Heart right ventricle (tissue), 16 donors: ENCODE measurements at regions of chr6 and their contacts with region 1.

Region 1: DNA sequence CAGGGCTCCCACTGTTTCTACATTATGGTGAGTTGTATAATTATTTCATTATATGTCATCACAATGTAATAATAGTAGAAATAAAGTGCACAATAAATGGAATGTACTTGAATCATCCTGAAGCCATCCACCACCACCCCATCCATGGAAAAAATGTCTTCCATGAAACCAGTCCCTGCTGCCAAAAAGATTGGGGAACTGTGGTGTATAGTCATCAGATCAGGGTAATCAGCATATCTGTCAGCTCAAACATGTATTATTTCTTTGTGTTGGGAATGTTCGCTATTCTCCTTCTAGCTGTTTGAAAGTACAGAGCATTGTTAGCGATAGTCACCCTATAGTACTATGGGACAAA is 33.8 kb upstream of the SLC22A23 start:
- DNase-seq: no peak
- ATAC-seq: no peak
- H3K4me3 ChIP-seq: no peak overlapping the region
- H3K27ac ChIP-seq: no peak overlapping the region
- H3K4me1 ChIP-seq: peaks cover 0 to 12% (median 0%) of the 10 kb centered on the region in 9 donors
- H3K27me3 ChIP-seq: peaks cover 0 to 23% (median 7%) of the 10 kb centered on the region in 7 donors
- CTCF ChIP-seq: no peak

Region 2: DNA sequence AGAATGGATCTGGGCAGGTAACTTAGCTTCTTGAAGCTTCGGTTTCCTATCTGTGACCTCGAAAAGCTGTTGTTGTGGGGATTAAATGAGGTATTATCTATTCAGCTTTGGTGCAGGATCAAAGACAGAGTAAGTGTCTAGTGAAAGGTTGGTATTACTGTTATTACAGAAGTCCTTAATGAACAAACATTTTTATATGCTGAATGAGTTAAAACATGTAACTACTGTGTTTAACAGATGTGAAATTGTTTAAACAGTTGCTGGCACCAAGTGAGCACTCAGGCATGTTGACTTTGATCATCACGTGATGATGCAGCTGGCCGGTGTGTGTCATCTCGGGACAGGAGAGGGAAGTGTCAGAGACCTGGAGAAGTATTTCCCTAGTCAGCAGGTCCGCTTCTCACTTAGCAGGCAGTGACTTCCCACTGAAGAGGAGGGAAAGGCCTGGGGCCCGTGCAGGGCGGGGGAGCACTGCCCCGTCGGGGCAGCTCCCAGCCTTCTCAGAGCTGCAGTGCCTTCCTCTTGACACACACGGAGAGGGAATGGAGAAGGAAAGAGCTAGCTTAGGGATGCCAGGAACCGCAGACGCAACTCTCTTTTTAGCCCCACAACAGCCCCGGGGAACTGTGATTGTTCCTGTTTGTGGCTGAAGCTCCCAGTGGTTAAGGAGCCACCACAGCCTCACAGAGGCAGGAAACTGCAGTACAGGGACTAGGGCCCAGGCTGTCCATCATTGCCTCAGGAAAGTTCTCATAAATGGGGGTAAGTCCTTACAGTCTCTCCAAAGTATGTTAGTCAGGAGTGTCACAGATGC is 351.3 kb before region 1 on chr6:
- intact Hi-C with region 1: loop called in 1 of 10 experiments (anchors 5 kb)
- DNase-seq: peak; percentile 43 to 50
- ATAC-seq: peak; percentile 80 to 95 (median 91)
- H3K4me3 ChIP-seq: no peak overlapping the region
- H3K27ac ChIP-seq: peak overlapping the region in 9 of 10 donors; percentile 29 to 74 (median 55)
- H3K4me1 ChIP-seq: peaks cover 0 to 29% (median 16%) of the 10 kb centered on the region in 9 donors
- H3K27me3 ChIP-seq: no peaks in the 10 kb centered on the region
- CTCF ChIP-seq: no peak